ENCODE measurements at regions of chr4 and their contacts with region 1.

Region 1: GRCh38 chr4:39638354-39639240 is at the start of gene SMIM14:
- DNase-seq: peak; percentile 96
- ATAC-seq: peak; percentile 92
- H3K4me3 ChIP-seq: peak within 1 kb of the TSS; percentile 83 to 95 (median 87)
- H3K27ac ChIP-seq: peak within 1 kb of the TSS; percentile 92
- H3K4me1 ChIP-seq: peaks cover 54% of the 10 kb centered on the region
- H3K27me3 ChIP-seq: no peaks in the 10 kb centered on the region; a peak in 1 of 5 replicates
- CTCF ChIP-seq: peak; percentile 36
- EP300 ChIP-seq: peak; percentile 31 to 58; a peak in 2 of 4 replicates
- POLR2A ChIP-seq: peak; percentile 87 to 92
- RAD21 ChIP-seq: 0 out of 2 replicates have a peak, but pooled peaks have one; percentile 28
- total RNA-seq, gene SMIM14: 16.3 and 26.2 TPM in 2 replicates

Region 2: GRCh38 chr4:39559626-39560025 is 79.0 kb before region 1 on chr4:
- CTCF ChIA-PET with region 1: no interaction called
- POLR2A ChIA-PET with region 1: interaction called, 17 read pairs
- in situ Hi-C with region 1: no loop called
- intact Hi-C with region 1: no loop called
- DNase-seq: no peak
- ATAC-seq: no peak
- H3K4me3 ChIP-seq: no peak overlapping the region
- H3K27ac ChIP-seq: no peak overlapping the region
- H3K4me1 ChIP-seq: peaks cover 26% of the 10 kb centered on the region
- H3K27me3 ChIP-seq: no peaks in the 10 kb centered on the region; a peak in 1 of 5 replicates
- CTCF ChIP-seq: no peak
- EP300 ChIP-seq: no peak
- POLR2A ChIP-seq: no peak
- RAD21 ChIP-seq: no peak

Region 3: DNA sequence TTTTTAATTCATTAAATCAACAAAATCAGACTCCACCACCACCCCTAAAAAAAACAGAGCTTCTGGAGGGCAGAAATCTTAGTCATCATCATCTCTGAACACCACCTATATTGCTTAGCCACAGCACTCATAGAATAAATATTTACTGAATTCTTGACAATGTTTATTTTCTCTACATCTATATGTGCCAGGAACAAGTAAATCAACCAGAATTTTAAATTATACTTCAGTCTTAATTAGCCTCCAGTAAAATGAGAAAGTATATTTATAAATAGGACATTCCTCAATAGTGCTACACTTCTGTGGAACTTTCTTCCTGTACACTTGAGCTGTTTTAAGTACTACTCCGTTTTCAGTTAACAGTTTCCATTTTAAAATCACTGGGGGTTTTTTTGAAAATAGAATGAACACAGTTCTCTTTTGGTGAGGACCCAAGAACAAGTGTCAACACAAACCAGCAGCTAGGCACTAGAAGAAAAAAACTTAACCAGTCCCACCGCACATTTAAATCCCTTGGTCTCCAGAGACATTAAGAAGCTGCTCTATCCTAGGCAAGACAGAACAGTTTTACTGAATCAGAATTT is 25.4 kb before region 1 on chr4:
- CTCF ChIA-PET with region 1: no interaction called
- POLR2A ChIA-PET with region 1: interaction called, 16 read pairs
- in situ Hi-C with region 1: no loop called
- intact Hi-C with region 1: no loop called
- DNase-seq: peak; percentile 49
- ATAC-seq: peak; percentile 63
- H3K4me3 ChIP-seq: no peak overlapping the region
- H3K27ac ChIP-seq: peak overlapping the region; percentile 49
- H3K4me1 ChIP-seq: peaks cover 80% of the 10 kb centered on the region
- H3K27me3 ChIP-seq: no peaks in the 10 kb centered on the region
- CTCF ChIP-seq: no peak
- EP300 ChIP-seq: no peak
- POLR2A ChIP-seq: no peak
- RAD21 ChIP-seq: no peak

Region 4: GRCh38 chr4:39621582-39621981 is 17.0 kb before region 1 on chr4:
- CTCF ChIA-PET with region 1: no interaction called
- POLR2A ChIA-PET with region 1: interaction called, 17 read pairs
- in situ Hi-C with region 1: no loop called
- intact Hi-C with region 1: loop called (anchors 2 kb)
- DNase-seq: peak; percentile 88
- ATAC-seq: peak; percentile 91
- H3K4me3 ChIP-seq: no peak overlapping the region; a peak in 1 of 6 replicates
- H3K27ac ChIP-seq: peak overlapping the region; percentile 49
- H3K4me1 ChIP-seq: peaks cover 57% of the 10 kb centered on the region
- H3K27me3 ChIP-seq: no peaks in the 10 kb centered on the region
- CTCF ChIP-seq: no peak
- EP300 ChIP-seq: peak in 1 of 2 experiments; percentile 54; a peak in 2 of 4 replicates
- POLR2A ChIP-seq: no peak
- RAD21 ChIP-seq: no peak

Region 5: GRCh38 chr4:39648815-39649558 is 10.4 kb after region 1 on chr4:
- CTCF ChIA-PET with region 1: no interaction called
- POLR2A ChIA-PET with region 1: interaction called, 53 read pairs
- in situ Hi-C with region 1: no loop called
- intact Hi-C with region 1: no loop called
- DNase-seq: no peak
- ATAC-seq: peak; percentile 57
- H3K4me3 ChIP-seq: no peak overlapping the region
- H3K27ac ChIP-seq: peak overlapping the region; percentile 83
- H3K4me1 ChIP-seq: peaks cover 44% of the 10 kb centered on the region
- H3K27me3 ChIP-seq: no peaks in the 10 kb centered on the region
- CTCF ChIP-seq: no peak
- EP300 ChIP-seq: no peak
- POLR2A ChIP-seq: no peak
- RAD21 ChIP-seq: no peak

Region 6: DNA sequence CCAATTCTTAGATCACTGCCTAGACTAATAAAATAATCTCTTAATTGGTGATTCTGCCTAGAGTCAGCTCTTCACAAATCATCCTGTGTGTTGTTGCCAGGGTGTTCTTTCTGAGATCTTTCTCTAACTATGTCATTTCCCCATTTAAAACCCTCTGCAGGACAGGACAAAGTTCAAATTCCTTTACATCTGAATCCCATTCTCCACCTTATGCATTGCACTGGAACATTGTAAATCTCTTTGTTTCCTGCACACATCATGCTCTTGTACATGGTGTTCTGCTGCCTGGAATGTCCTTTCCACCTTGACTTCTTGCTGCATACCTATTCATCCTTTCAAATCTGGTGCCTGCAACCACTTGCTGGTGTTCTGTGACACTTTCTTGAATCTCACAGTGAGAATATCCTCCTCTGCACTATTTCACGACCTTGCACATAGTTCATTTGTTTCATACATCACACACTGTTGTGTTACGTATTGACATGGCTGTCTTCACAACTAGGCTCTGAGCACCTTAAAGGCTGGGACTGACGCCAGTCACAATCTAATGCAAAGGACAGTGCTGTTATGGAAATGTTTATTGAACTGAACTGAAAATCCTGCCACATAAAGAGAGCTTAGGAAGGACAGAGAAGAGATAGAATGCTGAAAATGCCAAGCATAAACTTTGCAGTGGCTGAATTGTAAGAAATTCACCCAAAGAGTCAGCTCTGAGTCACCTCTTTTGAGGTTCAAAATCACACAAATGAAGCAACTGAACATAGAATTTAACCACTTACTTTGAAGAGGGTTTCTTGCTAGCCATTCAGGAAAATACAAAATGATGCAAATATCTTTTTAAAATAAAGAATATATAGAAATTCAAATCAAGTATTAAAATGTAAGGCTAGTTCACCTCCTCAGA is 26.5 kb after region 1 on chr4:
- CTCF ChIA-PET with region 1: no interaction called
- POLR2A ChIA-PET with region 1: interaction called, 12 read pairs
- in situ Hi-C with region 1: no loop called
- intact Hi-C with region 1: loop called (anchors 2 kb)
- DNase-seq: peak; percentile 89
- ATAC-seq: peak; percentile 96
- H3K4me3 ChIP-seq: peak overlapping the region in 1 of 3 experiments; percentile 10; a peak in 1 of 6 replicates
- H3K27ac ChIP-seq: peak overlapping the region; percentile 56
- H3K4me1 ChIP-seq: peaks cover 26% of the 10 kb centered on the region
- H3K27me3 ChIP-seq: no peaks in the 10 kb centered on the region
- CTCF ChIP-seq: no peak
- EP300 ChIP-seq: 0 out of 4 replicates have a peak, but pooled peaks of 1 of the 2 experiments have one; percentile 13
- POLR2A ChIP-seq: no peak
- RAD21 ChIP-seq: no peak

Region 7: DNA sequence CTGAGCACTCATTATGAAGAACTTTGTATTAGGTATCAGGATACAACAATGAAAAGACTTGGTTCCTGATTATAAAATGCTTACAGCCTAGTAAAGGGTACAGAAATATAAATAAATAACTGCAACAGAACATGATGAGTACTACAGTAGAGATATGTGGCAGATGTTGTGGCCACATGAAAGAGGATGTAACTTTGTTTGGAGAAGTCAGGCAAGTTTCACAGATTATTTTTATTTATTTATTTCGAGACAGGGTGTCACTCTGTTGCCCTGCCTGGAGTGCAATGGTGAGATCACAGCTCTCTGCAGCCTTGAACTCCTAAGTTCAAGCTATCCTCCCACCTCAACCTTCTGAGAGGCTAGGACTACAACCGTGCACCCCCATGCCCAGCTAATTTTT is 43.5 kb after region 1 on chr4:
- CTCF ChIA-PET with region 1: no interaction called
- POLR2A ChIA-PET with region 1: no interaction called
- in situ Hi-C with region 1: no loop called
- intact Hi-C with region 1: no loop called
- DNase-seq: no peak
- ATAC-seq: no peak
- H3K4me3 ChIP-seq: no peak overlapping the region
- H3K27ac ChIP-seq: no peak overlapping the region
- H3K4me1 ChIP-seq: peaks cover 8% of the 10 kb centered on the region; the same call in 1 of the 2 replicates
- H3K27me3 ChIP-seq: no peaks in the 10 kb centered on the region
- CTCF ChIP-seq: no peak
- EP300 ChIP-seq: no peak
- POLR2A ChIP-seq: no peak
- RAD21 ChIP-seq: no peak

Region 8: GRCh38 chr4:39697740-39698423 is 59.3 kb after region 1 on chr4 and contains the start of gene UBE2K:
- CTCF ChIA-PET with region 1: no interaction called
- POLR2A ChIA-PET with region 1: interaction called, 23 read pairs
- in situ Hi-C with region 1: no loop called
- intact Hi-C with region 1: loop called (anchors 1 kb)
- DNase-seq: peak; percentile 83
- ATAC-seq: peak; percentile 93
- H3K4me3 ChIP-seq: peak within 1 kb of the TSS; percentile 74 to 95 (median 79)
- H3K27ac ChIP-seq: peak within 1 kb of the TSS; percentile 96
- H3K4me1 ChIP-seq: peaks cover 18% of the 10 kb centered on the region
- H3K27me3 ChIP-seq: no peaks in the 10 kb centered on the region; a peak in 1 of 5 replicates
- CTCF ChIP-seq: no peak
- EP300 ChIP-seq: no peak; a peak in 1 of 4 replicates
- POLR2A ChIP-seq: peak; percentile 75 to 94
- RAD21 ChIP-seq: peak; percentile 49
- total RNA-seq, gene UBE2K: 36.2 and 72.9 TPM in 2 replicates